B cell (primary cell): ENCODE measurements at regions of chr4 and their contacts with region 1.

Region 1: DNA sequence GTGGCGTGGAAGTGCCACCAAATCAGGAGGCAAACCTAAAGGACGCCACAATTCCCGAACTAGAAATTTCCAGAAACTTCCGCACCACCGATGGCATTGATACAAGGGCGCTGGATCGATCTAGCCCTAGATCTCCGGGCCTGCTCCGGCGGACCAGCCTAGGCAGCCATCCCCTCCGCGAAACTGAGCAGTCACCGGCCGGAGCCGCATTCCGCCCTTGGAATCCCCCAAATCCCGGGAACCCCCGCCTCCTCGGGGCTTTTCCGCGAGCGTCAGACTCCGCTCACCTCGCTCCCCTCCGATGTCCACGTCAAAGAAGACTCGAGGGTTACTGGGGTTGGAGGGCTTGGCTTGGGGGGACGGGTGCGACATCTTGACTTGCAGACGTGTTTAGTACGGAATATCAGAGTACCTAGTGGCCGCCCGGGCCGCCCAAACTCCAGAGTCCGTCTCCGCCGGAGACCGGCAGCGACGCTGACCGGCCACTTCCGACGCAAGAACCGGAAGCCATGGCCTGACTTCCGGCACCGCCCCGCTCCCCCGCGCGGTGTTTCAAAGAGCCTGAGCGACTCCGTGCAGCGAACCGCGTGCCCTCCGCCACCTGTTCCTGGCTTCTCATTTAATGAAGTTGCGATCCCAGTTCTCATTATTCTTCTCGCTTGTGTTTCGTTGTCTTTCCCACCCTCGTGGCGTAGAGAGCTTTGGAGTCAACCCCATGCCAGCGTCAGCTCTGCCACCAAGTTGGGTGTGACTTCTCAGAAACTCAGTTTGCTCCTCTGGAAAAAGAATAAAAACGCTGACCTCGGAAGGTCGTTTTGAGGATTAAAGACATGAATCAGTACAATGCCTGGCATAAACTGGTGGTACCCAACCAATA is at the start of gene PPID:
- DNase-seq: peak; percentile 89
- ATAC-seq: peak; percentile 89
- H3K4me3 ChIP-seq: peak within 1 kb of the TSS; percentile 76 to 92 (median 88)
- H3K4me3 Mint-ChIP-seq: peak within 1 kb of the TSS; percentile 97
- H3K27ac ChIP-seq: peak within 1 kb of the TSS; percentile 71 to 87
- H3K27ac Mint-ChIP-seq: peak within 1 kb of the TSS; percentile 89
- H3K4me1 ChIP-seq: peaks cover 7 to 12% of the 10 kb centered on the region in 2 donors
- H3K4me1 Mint-ChIP-seq: peaks cover 20% of the 10 kb centered on the region
- H3K27me3 ChIP-seq: peaks cover 0 to 6% (median 4%) of the 10 kb centered on the region in 4 experiments
- H3K27me3 Mint-ChIP-seq: peaks cover 16% of the 10 kb centered on the region
- CTCF ChIP-seq: no peak
- total RNA-seq, gene PPID: 18.7 and 23.7 TPM in 2 replicates

Region 2: DNA sequence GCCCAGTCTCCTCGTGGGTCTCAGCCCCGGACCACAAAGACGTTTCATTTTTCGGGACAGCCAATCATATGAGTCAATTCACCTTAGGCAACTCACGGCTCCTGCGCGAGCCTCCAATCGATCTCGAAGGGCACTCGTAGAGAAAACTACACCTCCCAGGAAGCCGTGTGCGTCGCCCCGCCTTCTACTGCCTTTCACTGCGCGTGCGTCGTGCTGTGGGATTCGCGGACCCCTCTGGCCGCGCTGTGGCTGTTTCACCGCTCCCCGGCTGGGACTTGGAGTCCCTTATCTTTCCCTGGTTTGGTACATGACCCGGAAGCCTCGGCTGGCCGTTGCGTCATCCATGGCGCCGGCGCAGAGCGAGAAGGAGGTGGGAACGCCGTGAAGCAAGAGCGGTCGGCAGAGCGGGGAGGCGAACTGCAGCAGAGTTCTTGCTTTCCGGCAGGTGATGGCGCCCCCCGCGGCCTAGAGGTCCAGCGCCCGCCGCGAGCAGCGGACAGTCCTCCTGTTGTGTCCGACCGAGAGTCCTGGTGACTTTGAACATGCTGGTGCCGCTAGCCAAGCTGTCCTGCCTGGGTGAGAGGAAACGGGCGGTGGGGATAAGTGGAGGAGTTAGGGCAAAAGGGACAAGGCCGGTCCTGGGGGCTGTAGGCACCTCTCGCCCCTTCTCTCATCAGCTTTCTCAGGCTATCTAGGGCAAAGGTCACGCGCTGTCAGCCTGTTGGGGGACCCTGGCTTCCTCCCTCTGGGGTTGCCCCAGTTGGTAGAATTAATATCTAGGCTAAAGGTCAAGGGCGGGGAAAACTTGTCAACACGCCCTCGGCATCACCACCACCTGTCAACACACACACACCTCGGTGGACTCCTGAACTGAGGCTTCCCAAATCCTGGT is 51.0 kb before region 1 on chr4 and contains the start of gene ETFDH:
- CTCF ChIA-PET with region 1: no interaction called
- POLR2A ChIA-PET with region 1: no interaction called
- intact Hi-C with region 1: loop called (anchors 1 kb)
- DNase-seq: peak; percentile 100
- ATAC-seq: peak; percentile 80
- H3K4me3 ChIP-seq: peak within 1 kb of the TSS; percentile 73 to 96 (median 77)
- H3K4me3 Mint-ChIP-seq: peak within 1 kb of the TSS; percentile 90
- H3K27ac ChIP-seq: peak within 1 kb of the TSS; percentile 93 to 97
- H3K27ac Mint-ChIP-seq: peak within 1 kb of the TSS; percentile 95
- H3K4me1 ChIP-seq: peaks cover 12 to 13% of the 10 kb centered on the region in 2 donors
- H3K4me1 Mint-ChIP-seq: peaks cover 22% of the 10 kb centered on the region
- H3K27me3 ChIP-seq: no peaks in the 10 kb centered on the region
- H3K27me3 Mint-ChIP-seq: no peaks in the 10 kb centered on the region
- CTCF ChIP-seq: peak; percentile 68
- total RNA-seq, gene ETFDH: 8.8 and 10.8 TPM in 2 replicates